GM23248 (cell line): ENCODE measurements at regions of chr4 and their contacts with region 1.

Region 1: GRCh38 chr4:57043347-57044251 is 64.9 kb downstream of the POLR2B start:
- DNase-seq: peak; percentile 69
- H3K4me3 ChIP-seq: 0 out of 2 replicates have a peak overlapping the region, but pooled peaks have one; percentile 15
- H3K27ac ChIP-seq: peak overlapping the region; percentile 57
- H3K4me1 ChIP-seq: peaks cover 47% of the 10 kb centered on the region
- H3K27me3 ChIP-seq: no peaks in the 10 kb centered on the region

Region 2: GRCh38 chr4:56880572-56880971 is 163.0 kb before region 1 on chr4:
- in situ Hi-C with region 1: no loop called
- DNase-seq: no peak
- H3K4me3 ChIP-seq: no peak overlapping the region
- H3K27ac ChIP-seq: no peak overlapping the region
- H3K4me1 ChIP-seq: no peaks in the 10 kb centered on the region
- H3K27me3 ChIP-seq: 0 out of 2 replicates have a peak, but pooled peaks cover under 1% of the 10 kb centered on the region

Region 3: GRCh38 chr4:57158221-57158620 is 114.6 kb after region 1 on chr4:
- in situ Hi-C with region 1: loop called (anchors 10 kb)
- DNase-seq: peak; percentile 27
- H3K4me3 ChIP-seq: no peak overlapping the region
- H3K27ac ChIP-seq: no peak overlapping the region
- H3K4me1 ChIP-seq: no peaks in the 10 kb centered on the region; the same call in none of the 2 replicates
- H3K27me3 ChIP-seq: no peaks in the 10 kb centered on the region